ENCODE measurements at regions of chr20 and their contacts with region 1.

Region 1: DNA sequence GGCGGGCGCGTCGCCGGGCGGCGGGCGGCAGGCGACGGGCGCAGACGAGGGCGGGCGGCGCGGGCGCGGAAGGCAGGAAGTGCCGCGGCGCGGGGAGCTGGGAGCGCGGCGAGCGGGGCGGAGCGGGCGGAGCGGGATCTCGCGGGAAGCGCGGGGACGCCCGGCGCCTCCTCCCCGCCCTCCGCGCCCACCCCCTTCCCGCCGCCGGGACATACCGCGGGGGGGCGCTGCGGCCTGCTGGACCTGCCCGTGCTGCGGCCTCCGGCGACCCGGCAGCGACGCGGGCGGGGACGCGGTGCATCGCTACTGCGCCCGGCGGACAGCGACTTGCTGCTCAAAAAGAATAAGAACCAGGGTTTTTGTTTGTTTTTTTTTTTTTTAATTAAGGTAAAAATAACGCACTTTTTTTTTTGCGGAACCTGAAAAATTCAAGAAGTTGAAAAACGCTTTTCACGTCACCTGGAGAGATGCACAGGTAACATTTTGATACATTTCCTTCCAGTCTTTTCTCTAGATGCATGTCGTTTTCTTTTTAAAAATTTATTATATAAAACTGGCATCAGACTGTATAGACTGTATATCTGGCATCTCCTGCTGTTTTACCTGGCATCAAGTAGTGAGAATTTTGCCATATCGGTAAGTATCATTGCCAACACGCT is at the start of gene CENPB:
- DNase-seq: peak; percentile 87 to 94
- H3K4me3 ChIP-seq: peak within 1 kb of the TSS; percentile 56 to 85
- H3K27ac ChIP-seq: peak within 1 kb of the TSS; percentile 82 to 85
- H3K4me1 ChIP-seq: peaks cover 0 to 38% (median 35%) of the 10 kb centered on the region in 4 donors
- H3K27me3 ChIP-seq: no peaks in the 10 kb centered on the region
- CTCF ChIP-seq: peak; percentile 73 to 80

Region 2: GRCh38 chr20:3820048-3820900 is 33.5 kb after region 1 on chr20 and contains the start of gene AP5S1:
- intact Hi-C with region 1: loop called (anchors 2 kb)
- DNase-seq: peak; percentile 98
- H3K4me3 ChIP-seq: peak within 1 kb of the TSS; percentile 60 to 76
- H3K27ac ChIP-seq: peak within 1 kb of the TSS; percentile 94 to 95
- H3K4me1 ChIP-seq: peaks cover 0 to 17% (median 13%) of the 10 kb centered on the region in 4 donors
- H3K27me3 ChIP-seq: no peaks in the 10 kb centered on the region
- CTCF ChIP-seq: peak; percentile 99 to 100

Region 3: GRCh38 chr20:3854462-3854871 is 67.7 kb after region 1 on chr20:
- intact Hi-C with region 1: loop called (anchors 10 kb)
- DNase-seq: no peak
- H3K4me3 ChIP-seq: no peak overlapping the region
- H3K27ac ChIP-seq: no peak overlapping the region
- H3K4me1 ChIP-seq: peaks cover 0 to 7% (median under 1%) of the 10 kb centered on the region in 4 donors
- H3K27me3 ChIP-seq: no peaks in the 10 kb centered on the region
- CTCF ChIP-seq: no peak

Measured in tibial artery (tissue), 4 donors.